PC-3 (cell line): ENCODE measurements at regions of chr3 and their contacts with region 1.

Region 1: GRCh38 chr3:153026026-153026425 is 136.0 kb upstream of the RAP2B start:
- DNase-seq: peak; percentile 67
- ATAC-seq: peak; percentile 33
- H3K4me3 ChIP-seq: no peak overlapping the region
- H3K27ac ChIP-seq: no peak overlapping the region
- H3K4me1 ChIP-seq: no peaks in the 10 kb centered on the region
- H3K27me3 ChIP-seq: no peaks in the 10 kb centered on the region
- CTCF ChIP-seq: peak; percentile 91

Region 2: GRCh38 chr3:152695840-152696239 is 330.2 kb before region 1 on chr3:
- CTCF ChIA-PET with region 1: no interaction called
- POLR2A ChIA-PET with region 1: no interaction called
- intact Hi-C with region 1: loop called (anchors 5 kb)
- DNase-seq: no peak
- ATAC-seq: no peak
- H3K4me3 ChIP-seq: no peak overlapping the region
- H3K27ac ChIP-seq: no peak overlapping the region
- H3K4me1 ChIP-seq: no peaks in the 10 kb centered on the region
- H3K27me3 ChIP-seq: no peaks in the 10 kb centered on the region
- CTCF ChIP-seq: no peak

Region 3: GRCh38 chr3:153291056-153291685 is 265.1 kb after region 1 on chr3:
- CTCF ChIA-PET with region 1: interaction called, 3 read pairs
- POLR2A ChIA-PET with region 1: no interaction called
- intact Hi-C with region 1: loop called (anchors 1 kb)
- DNase-seq: peak; percentile 69
- ATAC-seq: peak; percentile 80
- H3K4me3 ChIP-seq: no peak overlapping the region
- H3K27ac ChIP-seq: no peak overlapping the region
- H3K4me1 ChIP-seq: peaks cover 33% of the 10 kb centered on the region
- H3K27me3 ChIP-seq: no peaks in the 10 kb centered on the region
- CTCF ChIP-seq: peak; percentile 85

Region 4: GRCh38 chr3:153443961-153444360 is 417.9 kb after region 1 on chr3:
- CTCF ChIA-PET with region 1: interaction called, 4 read pairs
- POLR2A ChIA-PET with region 1: no interaction called
- intact Hi-C with region 1: loop called (anchors 2 kb)
- DNase-seq: peak; percentile 65
- ATAC-seq: no peak
- H3K4me3 ChIP-seq: no peak overlapping the region
- H3K27ac ChIP-seq: no peak overlapping the region
- H3K4me1 ChIP-seq: no peaks in the 10 kb centered on the region
- H3K27me3 ChIP-seq: no peaks in the 10 kb centered on the region
- CTCF ChIP-seq: peak; percentile 72

Region 5: GRCh38 chr3:153768561-153769469 is 742.8 kb after region 1 on chr3:
- CTCF ChIA-PET with region 1: no interaction called
- POLR2A ChIA-PET with region 1: no interaction called
- intact Hi-C with region 1: loop called (anchors 5 kb)
- DNase-seq: peak; percentile 78
- ATAC-seq: peak; percentile 93
- H3K4me3 ChIP-seq: no peak overlapping the region
- H3K27ac ChIP-seq: no peak overlapping the region
- H3K4me1 ChIP-seq: 0 out of 2 replicates have a peak, but pooled peaks cover 4% of the 10 kb centered on the region
- H3K27me3 ChIP-seq: no peaks in the 10 kb centered on the region
- CTCF ChIP-seq: peak; percentile 96

Region 6: DNA sequence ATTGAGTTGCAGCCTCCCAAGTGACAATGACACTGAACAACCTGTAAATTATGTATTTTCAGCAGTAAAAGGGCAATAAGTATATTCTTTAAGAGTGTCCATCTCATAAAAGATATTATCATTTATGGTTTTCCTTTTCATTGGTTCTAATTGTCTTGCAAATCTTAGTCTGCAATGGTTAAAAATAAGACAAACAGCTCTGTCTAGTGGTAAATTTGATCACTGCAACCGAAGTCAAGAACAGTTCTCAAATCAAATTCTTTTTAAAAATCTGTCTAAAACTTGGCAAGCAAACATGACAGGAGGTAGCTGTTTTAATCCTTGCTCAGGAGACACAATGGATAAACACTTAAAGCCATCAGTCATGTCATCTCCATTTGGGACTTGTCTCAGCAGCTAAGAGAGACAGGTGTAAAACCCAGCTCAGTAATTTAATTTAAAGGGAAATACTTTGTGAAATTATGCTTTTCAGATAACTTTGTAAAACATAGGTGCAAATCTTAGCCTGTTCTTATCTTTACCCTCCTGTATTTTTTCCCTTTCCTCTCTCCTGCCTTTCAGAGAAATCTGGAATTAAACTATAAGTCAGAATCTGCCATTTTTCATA is 944.8 kb after region 1 on chr3:
- CTCF ChIA-PET with region 1: no interaction called
- POLR2A ChIA-PET with region 1: no interaction called
- intact Hi-C with region 1: loop called (anchors 5 kb)
- DNase-seq: peak; percentile 62
- ATAC-seq: peak; percentile 72
- H3K4me3 ChIP-seq: no peak overlapping the region
- H3K27ac ChIP-seq: no peak overlapping the region
- H3K4me1 ChIP-seq: peaks cover 8% of the 10 kb centered on the region
- H3K27me3 ChIP-seq: no peaks in the 10 kb centered on the region
- CTCF ChIP-seq: peak; percentile 82

Region 7: GRCh38 chr3:154018100-154018696 is 992.2 kb after region 1 on chr3:
- CTCF ChIA-PET with region 1: no interaction called
- POLR2A ChIA-PET with region 1: no interaction called
- intact Hi-C with region 1: loop called (anchors 5 kb)
- DNase-seq: peak; percentile 67
- ATAC-seq: peak; percentile 91
- H3K4me3 ChIP-seq: no peak overlapping the region
- H3K27ac ChIP-seq: no peak overlapping the region
- H3K4me1 ChIP-seq: no peaks in the 10 kb centered on the region
- H3K27me3 ChIP-seq: no peaks in the 10 kb centered on the region
- CTCF ChIP-seq: peak; percentile 92